CD4-positive, alpha-beta T cell (primary cell): ENCODE measurements at regions of chr19 and their contacts with region 1.

Region 1: DNA sequence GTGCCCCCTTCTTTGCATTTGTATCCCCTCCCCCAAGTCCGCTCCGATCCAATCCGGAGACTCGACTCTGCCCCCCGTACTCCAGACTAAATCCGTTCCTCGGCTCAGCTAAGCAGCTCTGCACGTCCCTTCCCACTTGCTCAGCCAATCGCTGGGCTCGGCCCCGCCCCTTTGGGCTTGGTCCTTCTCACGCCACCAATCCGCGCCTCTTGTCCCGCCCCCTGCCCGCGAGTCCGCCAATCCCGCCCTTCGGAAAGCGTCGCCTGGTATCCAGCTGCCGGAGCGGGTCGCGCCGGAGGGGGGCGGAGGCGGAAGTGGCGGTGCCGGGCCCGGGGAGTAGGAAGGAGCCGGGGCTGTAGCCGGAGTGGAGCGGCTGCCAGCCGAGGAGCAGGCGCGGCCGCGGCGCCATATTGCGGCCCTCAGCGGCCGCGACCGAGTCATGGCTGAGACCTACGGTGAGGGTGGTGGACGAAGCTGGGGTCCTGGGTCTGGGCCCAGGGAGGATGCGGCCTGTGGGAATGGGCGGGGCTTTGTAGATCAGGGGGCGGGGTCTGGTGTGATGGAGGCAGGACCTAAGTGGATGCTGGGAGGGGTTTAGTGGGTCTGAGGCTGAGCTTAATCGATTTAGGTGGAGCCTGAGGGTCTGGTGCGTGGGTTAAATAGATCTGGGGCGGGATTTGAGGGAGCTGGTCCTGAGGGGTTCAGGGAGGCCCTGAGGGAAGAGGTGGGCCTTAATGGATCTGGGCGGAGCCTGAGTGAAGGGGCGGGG is at the start of gene RAB4B:
- DNase-seq: peak; percentile 99 to 100 (median 100)
- ATAC-seq: peak; percentile 84
- H3K4me3 ChIP-seq: peak within 1 kb of the TSS; percentile 69
- H3K4me3 Mint-ChIP-seq: peak within 1 kb of the TSS; percentile 95
- H3K27ac ChIP-seq: peak within 1 kb of the TSS; percentile 93 to 95
- H3K27ac Mint-ChIP-seq: peak within 1 kb of the TSS; percentile 93
- H3K4me1 ChIP-seq: peaks cover 23% of the 10 kb centered on the region
- H3K4me1 Mint-ChIP-seq: peaks cover 36% of the 10 kb centered on the region
- H3K27me3 ChIP-seq: no peaks in the 10 kb centered on the region
- H3K27me3 Mint-ChIP-seq: no peaks in the 10 kb centered on the region
- CTCF ChIP-seq: no peak
- total RNA-seq, gene RAB4B: 26.6 to 26.9 TPM

Region 2: GRCh38 chr19:40716655-40717324 is 61.3 kb before region 1 on chr19 and contains the starts of genes COQ8B and ITPKC:
- CTCF ChIA-PET with region 1: interaction called, 3 read pairs
- POLR2A ChIA-PET with region 1: interaction called, 16 read pairs
- intact Hi-C with region 1: loop called (anchors 1 kb)
- DNase-seq: peak; percentile 98 to 100 (median 99)
- ATAC-seq: peak; percentile 73
- H3K4me3 ChIP-seq: peak within 1 kb of the TSS; percentile 89
- H3K4me3 Mint-ChIP-seq: peak within 1 kb of the TSS; percentile 95
- H3K27ac ChIP-seq: peak within 1 kb of the TSS; percentile 89 to 96
- H3K27ac Mint-ChIP-seq: peak within 1 kb of the TSS; percentile 94
- H3K4me1 ChIP-seq: peaks cover 70% of the 10 kb centered on the region
- H3K4me1 Mint-ChIP-seq: peaks cover 70% of the 10 kb centered on the region
- H3K27me3 ChIP-seq: no peaks in the 10 kb centered on the region
- H3K27me3 Mint-ChIP-seq: no peaks in the 10 kb centered on the region
- CTCF ChIP-seq: no peak
- total RNA-seq, gene COQ8B: 16.4 to 18.3 TPM
- total RNA-seq, gene ITPKC: 3.7 to 4.5 TPM

Region 3: DNA sequence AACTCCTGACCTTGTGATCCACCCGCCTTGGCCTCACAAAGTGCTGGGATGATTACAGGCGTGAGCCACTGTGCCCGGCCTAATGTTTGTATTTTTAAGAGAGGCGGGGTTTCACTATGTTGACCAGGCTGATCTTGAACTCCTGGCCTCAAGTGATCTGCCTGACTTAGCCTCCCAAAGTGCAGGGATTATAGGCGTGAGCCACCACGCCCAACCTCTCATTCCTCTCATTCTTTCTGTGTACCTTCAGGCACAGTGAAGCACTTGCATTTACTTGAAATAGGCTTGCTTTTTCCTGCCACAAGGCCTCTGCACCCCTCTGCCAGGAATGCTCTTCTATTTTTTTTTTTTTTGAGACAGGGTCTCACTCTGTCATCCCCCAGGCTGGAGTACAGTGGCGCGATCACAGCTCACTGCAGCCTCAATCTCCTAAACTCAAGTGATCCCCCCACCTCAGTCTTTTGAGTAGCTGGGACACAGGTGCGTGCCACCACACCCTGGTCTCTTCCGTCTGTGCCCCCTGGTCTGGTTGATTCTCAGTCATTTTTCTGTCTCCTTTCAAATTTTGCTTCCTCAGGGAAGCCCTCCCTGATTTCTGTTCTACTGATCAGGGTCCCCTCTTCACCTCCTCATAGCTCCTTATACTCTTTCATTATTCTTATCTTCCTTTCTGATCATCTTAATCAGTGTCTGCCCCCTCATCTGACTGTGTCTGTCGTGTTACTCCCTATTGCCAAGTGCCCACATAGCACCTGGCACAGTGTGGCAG is 42.9 kb before region 1 on chr19:
- CTCF ChIA-PET with region 1: no interaction called
- POLR2A ChIA-PET with region 1: no interaction called
- intact Hi-C with region 1: no loop called
- DNase-seq: no peak
- ATAC-seq: no peak
- H3K4me3 ChIP-seq: no peak overlapping the region
- H3K4me3 Mint-ChIP-seq: no peak overlapping the region
- H3K27ac ChIP-seq: no peak overlapping the region
- H3K27ac Mint-ChIP-seq: no peak overlapping the region
- H3K4me1 ChIP-seq: no peaks in the 10 kb centered on the region
- H3K4me1 Mint-ChIP-seq: no peaks in the 10 kb centered on the region
- H3K27me3 ChIP-seq: no peaks in the 10 kb centered on the region
- H3K27me3 Mint-ChIP-seq: no peaks in the 10 kb centered on the region
- CTCF ChIP-seq: no peak

Region 4: GRCh38 chr19:40798223-40798996 is 20.3 kb after region 1 on chr19:
- CTCF ChIA-PET with region 1: interaction called, 24 read pairs
- POLR2A ChIA-PET with region 1: interaction called, 198 read pairs
- intact Hi-C with region 1: loop called (anchors 1 kb)
- DNase-seq: peak; percentile 100
- ATAC-seq: peak; percentile 78
- H3K4me3 ChIP-seq: peak overlapping the region; percentile 64
- H3K4me3 Mint-ChIP-seq: peak overlapping the region; percentile 92
- H3K27ac ChIP-seq: peak overlapping the region; percentile 88 to 96
- H3K27ac Mint-ChIP-seq: peak overlapping the region; percentile 98
- H3K4me1 ChIP-seq: peaks cover 47% of the 10 kb centered on the region
- H3K4me1 Mint-ChIP-seq: peaks cover 45% of the 10 kb centered on the region
- H3K27me3 ChIP-seq: no peaks in the 10 kb centered on the region
- H3K27me3 Mint-ChIP-seq: no peaks in the 10 kb centered on the region
- CTCF ChIP-seq: peak; percentile 40

Region 5: GRCh38 chr19:40806488-40807468 is 28.7 kb after region 1 on chr19:
- CTCF ChIA-PET with region 1: interaction called, 40 read pairs
- POLR2A ChIA-PET with region 1: interaction called, 198 read pairs
- intact Hi-C with region 1: no loop called
- DNase-seq: peak; percentile 66 to 95 (median 75)
- ATAC-seq: peak; percentile 47
- H3K4me3 ChIP-seq: peak overlapping the region; percentile 24
- H3K4me3 Mint-ChIP-seq: peak overlapping the region; percentile 96
- H3K27ac ChIP-seq: peak overlapping the region; percentile 86 to 88
- H3K27ac Mint-ChIP-seq: peak overlapping the region; percentile 90
- H3K4me1 ChIP-seq: peaks cover 100% of the 10 kb centered on the region
- H3K4me1 Mint-ChIP-seq: peaks cover 85% of the 10 kb centered on the region
- H3K27me3 ChIP-seq: no peaks in the 10 kb centered on the region
- H3K27me3 Mint-ChIP-seq: no peaks in the 10 kb centered on the region
- CTCF ChIP-seq: peak; percentile 79

Region 6: GRCh38 chr19:40813182-40813958 is 35.2 kb after region 1 on chr19:
- CTCF ChIA-PET with region 1: interaction called, 40 read pairs
- POLR2A ChIA-PET with region 1: interaction called, 59 read pairs
- intact Hi-C with region 1: loop called in 1 of 2 experiments (anchors 5 kb)
- DNase-seq: no peak
- ATAC-seq: no peak
- H3K4me3 ChIP-seq: no peak overlapping the region
- H3K4me3 Mint-ChIP-seq: peak overlapping the region; percentile 95
- H3K27ac ChIP-seq: no peak overlapping the region
- H3K27ac Mint-ChIP-seq: peak overlapping the region; percentile 90
- H3K4me1 ChIP-seq: peaks cover 49% of the 10 kb centered on the region
- H3K4me1 Mint-ChIP-seq: peaks cover 41% of the 10 kb centered on the region
- H3K27me3 ChIP-seq: no peaks in the 10 kb centered on the region
- H3K27me3 Mint-ChIP-seq: no peaks in the 10 kb centered on the region
- CTCF ChIP-seq: no peak

Region 7: GRCh38 chr19:40822161-40822560 is 44.0 kb after region 1 on chr19:
- CTCF ChIA-PET with region 1: interaction called, 3 read pairs
- POLR2A ChIA-PET with region 1: interaction called, 6 read pairs
- intact Hi-C with region 1: loop called (anchors 1 to 5 kb)
- DNase-seq: peak in 1 of 14 experiments; percentile 17
- ATAC-seq: no peak
- H3K4me3 ChIP-seq: no peak overlapping the region
- H3K4me3 Mint-ChIP-seq: no peak overlapping the region
- H3K27ac ChIP-seq: no peak overlapping the region
- H3K27ac Mint-ChIP-seq: no peak overlapping the region
- H3K4me1 ChIP-seq: peaks cover 47% of the 10 kb centered on the region
- H3K4me1 Mint-ChIP-seq: peaks cover 38% of the 10 kb centered on the region
- H3K27me3 ChIP-seq: no peaks in the 10 kb centered on the region
- H3K27me3 Mint-ChIP-seq: no peaks in the 10 kb centered on the region
- CTCF ChIP-seq: no peak

Region 8: GRCh38 chr19:40889366-40889765 is 111.2 kb after region 1 on chr19:
- CTCF ChIA-PET with region 1: no interaction called
- POLR2A ChIA-PET with region 1: no interaction called
- intact Hi-C with region 1: no loop called
- DNase-seq: no peak
- ATAC-seq: no peak
- H3K4me3 ChIP-seq: no peak overlapping the region
- H3K4me3 Mint-ChIP-seq: no peak overlapping the region
- H3K27ac ChIP-seq: no peak overlapping the region
- H3K27ac Mint-ChIP-seq: no peak overlapping the region
- H3K4me1 ChIP-seq: no peaks in the 10 kb centered on the region
- H3K4me1 Mint-ChIP-seq: no peaks in the 10 kb centered on the region
- H3K27me3 ChIP-seq: peaks cover 4 to 8% of the 10 kb centered on the region in 2 experiments
- H3K27me3 Mint-ChIP-seq: peaks cover 30% of the 10 kb centered on the region
- CTCF ChIP-seq: no peak